ENCODE measurements at regions of chr1 and their contacts with region 1.

Region 1: GRCh38 chr1:39258146-39258924 is 53.8 kb downstream of the MACF1 start:
- DNase-seq: peak; percentile 32
- ATAC-seq: peak; percentile 70
- H3K4me3 Mint-ChIP-seq: no peak overlapping the region
- H3K27ac Mint-ChIP-seq: peak overlapping the region; percentile 11
- H3K4me1 Mint-ChIP-seq: peaks cover 32% of the 10 kb centered on the region
- H3K27me3 Mint-ChIP-seq: no peaks in the 10 kb centered on the region
- CTCF ChIP-seq: peak; percentile 55

Region 2: GRCh38 chr1:39105061-39105840 is 153.1 kb before region 1 on chr1:
- CTCF ChIA-PET with region 1: interaction called, 109 read pairs
- POLR2A ChIA-PET with region 1: no interaction called
- intact Hi-C with region 1: loop called (anchors 1 kb)
- DNase-seq: peak; percentile 62
- ATAC-seq: peak; percentile 8
- H3K4me3 Mint-ChIP-seq: no peak overlapping the region
- H3K27ac Mint-ChIP-seq: no peak overlapping the region
- H3K4me1 Mint-ChIP-seq: peaks cover 33% of the 10 kb centered on the region
- H3K27me3 Mint-ChIP-seq: no peaks in the 10 kb centered on the region
- CTCF ChIP-seq: no peak

Region 3: GRCh38 chr1:39129514-39129913 is 128.8 kb before region 1 on chr1:
- CTCF ChIA-PET with region 1: interaction called, 3 read pairs
- POLR2A ChIA-PET with region 1: no interaction called
- intact Hi-C with region 1: loop called (anchors 1 kb)
- DNase-seq: no peak
- ATAC-seq: no peak
- H3K4me3 Mint-ChIP-seq: no peak overlapping the region
- H3K27ac Mint-ChIP-seq: no peak overlapping the region
- H3K4me1 Mint-ChIP-seq: no peaks in the 10 kb centered on the region
- H3K27me3 Mint-ChIP-seq: no peaks in the 10 kb centered on the region
- CTCF ChIP-seq: no peak

Region 4: GRCh38 chr1:39183503-39184353 is 74.6 kb before region 1 on chr1:
- CTCF ChIA-PET with region 1: interaction called, 25 read pairs
- POLR2A ChIA-PET with region 1: no interaction called
- intact Hi-C with region 1: loop called (anchors 2 kb)
- DNase-seq: no peak
- ATAC-seq: peak; percentile 81
- H3K4me3 Mint-ChIP-seq: peak overlapping the region; percentile 21
- H3K27ac Mint-ChIP-seq: peak overlapping the region; percentile 76
- H3K4me1 Mint-ChIP-seq: peaks cover 47% of the 10 kb centered on the region
- H3K27me3 Mint-ChIP-seq: no peaks in the 10 kb centered on the region
- CTCF ChIP-seq: no peak

Region 5: DNA sequence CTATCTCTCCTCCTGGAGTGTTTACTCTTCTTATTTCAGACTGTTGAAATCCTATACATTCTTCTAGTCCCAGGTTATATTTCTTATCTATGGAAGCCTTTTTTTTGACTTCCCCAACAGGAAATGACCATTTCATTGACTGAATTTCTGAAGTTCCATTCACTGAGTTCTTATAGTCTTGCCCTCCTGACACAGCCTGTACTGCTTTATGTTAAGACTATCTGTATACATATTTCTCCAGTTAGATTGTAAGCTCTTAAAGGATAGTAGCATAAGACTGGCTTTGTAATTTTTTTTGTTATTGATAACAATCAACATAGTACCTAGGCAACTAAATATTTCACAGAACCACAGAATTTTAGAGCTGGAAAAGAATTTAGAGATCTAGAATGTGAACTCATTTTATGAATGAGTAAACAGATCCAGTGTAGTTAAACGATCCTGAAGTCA is 68.7 kb before region 1 on chr1:
- CTCF ChIA-PET with region 1: interaction called, 120 read pairs
- POLR2A ChIA-PET with region 1: interaction called, 4 read pairs
- intact Hi-C with region 1: loop called (anchors 1 kb)
- DNase-seq: no peak
- ATAC-seq: no peak
- H3K4me3 Mint-ChIP-seq: no peak overlapping the region
- H3K27ac Mint-ChIP-seq: no peak overlapping the region
- H3K4me1 Mint-ChIP-seq: peaks cover 67% of the 10 kb centered on the region
- H3K27me3 Mint-ChIP-seq: no peaks in the 10 kb centered on the region
- CTCF ChIP-seq: no peak